Activated naive CD4-positive, alpha-beta T cell treated with anti-CD3 and anti-CD28 coated beads, Interleukin-2, amount 10 ng/mL, durations not matched to agents 7 days and 5 days (primary cell): ENCODE measurements at regions of chr5 and their contacts with region 1.

Region 1: GRCh38 chr5:69093771-69094482 is at the start of gene SLC30A5:
- DNase-seq: peak; percentile 99
- H3K4me3 Mint-ChIP-seq: peak within 1 kb of the TSS; percentile 94
- H3K27ac Mint-ChIP-seq: peak within 1 kb of the TSS; percentile 97
- H3K4me1 Mint-ChIP-seq: peaks cover 38% of the 10 kb centered on the region
- H3K27me3 Mint-ChIP-seq: no peaks in the 10 kb centered on the region

Region 2: DNA sequence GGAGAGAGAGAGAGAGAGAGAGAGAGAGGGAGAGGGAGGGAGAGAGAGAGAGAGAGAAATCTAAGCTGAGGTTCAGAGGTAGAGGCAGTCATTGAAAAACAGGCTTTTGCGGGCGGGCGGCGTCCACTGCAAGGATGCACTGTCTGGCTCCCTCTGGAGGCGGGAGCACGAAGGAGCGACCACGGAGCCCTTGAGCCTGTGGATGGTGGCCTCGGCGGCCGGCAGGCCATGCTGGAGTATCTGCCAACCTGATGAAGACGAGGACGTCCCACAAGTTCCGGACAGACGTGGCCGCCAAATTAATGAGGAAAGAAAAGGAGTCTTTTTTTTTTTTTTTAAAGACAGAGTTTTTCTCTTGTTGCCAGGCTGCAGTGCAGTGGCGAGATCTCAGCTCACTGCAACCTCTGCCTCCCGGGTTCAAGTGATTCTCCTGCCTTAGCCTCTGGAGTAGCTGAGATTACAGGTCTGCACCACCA is 240.9 kb after region 1 on chr5:
- CTCF ChIA-PET with region 1: interaction called, 30 read pairs
- DNase-seq: peak; percentile 86
- H3K4me3 Mint-ChIP-seq: peak overlapping the region; percentile 36
- H3K27ac Mint-ChIP-seq: peak overlapping the region; percentile 55
- H3K4me1 Mint-ChIP-seq: peaks cover 25% of the 10 kb centered on the region
- H3K27me3 Mint-ChIP-seq: peaks cover 5% of the 10 kb centered on the region

Region 3: DNA sequence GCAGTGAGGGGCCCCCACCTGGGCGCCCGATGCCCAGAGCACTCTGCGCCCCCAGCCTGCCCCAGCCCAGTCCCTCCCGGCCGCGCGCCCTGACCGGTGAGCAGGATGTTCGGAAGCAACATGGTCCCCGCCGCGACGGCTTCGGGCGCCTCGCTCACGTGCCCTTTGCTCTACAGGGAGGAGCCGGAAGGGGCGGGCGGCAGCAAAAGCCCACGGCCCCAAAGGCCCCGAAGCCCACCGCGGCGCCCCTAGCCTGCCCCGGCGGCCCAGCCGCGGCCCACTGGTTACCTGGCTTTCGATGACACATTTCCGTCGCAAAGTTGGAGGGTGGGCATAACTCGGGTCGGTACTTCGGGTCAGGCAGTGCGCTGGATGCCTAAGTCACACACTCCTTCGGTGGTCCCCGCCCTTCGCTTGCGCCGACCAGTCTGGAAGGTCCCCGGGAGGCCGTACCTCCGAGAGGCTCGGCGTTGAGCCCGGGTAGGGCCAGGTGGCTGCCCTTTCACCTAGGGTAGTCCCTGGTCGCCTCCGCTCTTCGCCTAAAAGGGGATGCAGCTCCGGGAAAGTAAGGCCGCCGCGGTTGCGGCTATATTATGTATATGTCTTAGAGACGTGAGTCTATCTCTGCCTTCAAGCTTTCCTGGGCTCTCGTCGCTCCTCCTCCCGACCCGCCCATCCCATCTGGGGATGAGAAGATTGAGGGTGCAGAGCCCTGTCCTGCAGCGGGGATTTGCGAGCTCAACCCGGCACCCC is 275.6 kb after region 1 on chr5 and contains the starts of genes AK6, RAD17 and TAF9:
- CTCF ChIA-PET with region 1: interaction called, 10 read pairs
- DNase-seq: peak; percentile 95
- H3K4me3 Mint-ChIP-seq: peak within 1 kb of the TSS; percentile 99
- H3K27ac Mint-ChIP-seq: peak within 1 kb of the TSS; percentile 98
- H3K4me1 Mint-ChIP-seq: peaks cover 48% of the 10 kb centered on the region
- H3K27me3 Mint-ChIP-seq: no peaks in the 10 kb centered on the region